ENCODE measurements at regions of chr2 and their contacts with region 1.

Region 1: GRCh38 chr2:59932341-59932740 is 621.1 kb downstream of the BCL11A start:
- DNase-seq: peak; percentile 10 to 47
- H3K4me3 ChIP-seq: no peak overlapping the region
- H3K27ac ChIP-seq: no peak overlapping the region
- H3K4me1 ChIP-seq: no peaks in the 10 kb centered on the region
- H3K27me3 ChIP-seq: no peaks in the 10 kb centered on the region
- CTCF ChIP-seq: peak; percentile 5 to 64 (median 54); a peak in 3 of 4 replicates
- EP300 ChIP-seq: no peak
- POLR2A ChIP-seq: no peak
- RAD21 ChIP-seq: peak; percentile 67 to 80

Region 2: GRCh38 chr2:59888015-59888414 is 44.3 kb before region 1 on chr2:
- CTCF ChIA-PET with region 1: interaction called, 16 read pairs
- POLR2A ChIA-PET with region 1: no interaction called
- DNase-seq: peak in 1 of 2 experiments; percentile 13
- H3K4me3 ChIP-seq: no peak overlapping the region
- H3K27ac ChIP-seq: no peak overlapping the region
- H3K4me1 ChIP-seq: peaks cover 2 to 8% (median 4%) of the 10 kb centered on the region in 4 experiments; a peak in 5 of 7 replicates
- H3K27me3 ChIP-seq: no peaks in the 10 kb centered on the region; a peak in 1 of 7 replicates
- CTCF ChIP-seq: no peak
- EP300 ChIP-seq: no peak
- POLR2A ChIP-seq: no peak
- RAD21 ChIP-seq: peak; percentile 46 to 53

Region 3: DNA sequence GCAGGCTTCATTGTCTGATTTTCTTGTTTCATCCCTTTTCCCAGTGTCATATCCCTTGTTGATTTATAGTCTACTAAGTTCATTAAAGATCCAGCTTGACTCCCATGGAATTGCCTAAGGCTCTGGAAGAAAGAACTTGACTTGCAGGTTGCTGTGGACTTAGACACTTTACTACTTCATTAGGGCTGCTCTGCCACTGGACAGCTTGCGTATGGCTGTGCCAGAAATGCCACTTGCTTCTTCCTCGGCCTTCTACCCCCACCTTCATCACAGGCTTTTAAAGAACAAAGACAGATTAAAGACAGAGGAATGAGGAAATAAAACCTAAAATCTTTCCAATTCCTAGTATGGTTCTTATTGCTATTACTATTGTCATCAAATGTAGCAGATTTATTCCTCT is 29.4 kb after region 1 on chr2:
- CTCF ChIA-PET with region 1: interaction called, 12 read pairs
- POLR2A ChIA-PET with region 1: no interaction called
- DNase-seq: no peak
- H3K4me3 ChIP-seq: no peak overlapping the region
- H3K27ac ChIP-seq: no peak overlapping the region
- H3K4me1 ChIP-seq: peaks cover 0 to 11% (median under 1%) of the 10 kb centered on the region in 4 experiments; a peak in 3 of 7 replicates
- H3K27me3 ChIP-seq: no peaks in the 10 kb centered on the region
- CTCF ChIP-seq: no peak
- EP300 ChIP-seq: no peak
- POLR2A ChIP-seq: no peak
- RAD21 ChIP-seq: no peak

Region 4: DNA sequence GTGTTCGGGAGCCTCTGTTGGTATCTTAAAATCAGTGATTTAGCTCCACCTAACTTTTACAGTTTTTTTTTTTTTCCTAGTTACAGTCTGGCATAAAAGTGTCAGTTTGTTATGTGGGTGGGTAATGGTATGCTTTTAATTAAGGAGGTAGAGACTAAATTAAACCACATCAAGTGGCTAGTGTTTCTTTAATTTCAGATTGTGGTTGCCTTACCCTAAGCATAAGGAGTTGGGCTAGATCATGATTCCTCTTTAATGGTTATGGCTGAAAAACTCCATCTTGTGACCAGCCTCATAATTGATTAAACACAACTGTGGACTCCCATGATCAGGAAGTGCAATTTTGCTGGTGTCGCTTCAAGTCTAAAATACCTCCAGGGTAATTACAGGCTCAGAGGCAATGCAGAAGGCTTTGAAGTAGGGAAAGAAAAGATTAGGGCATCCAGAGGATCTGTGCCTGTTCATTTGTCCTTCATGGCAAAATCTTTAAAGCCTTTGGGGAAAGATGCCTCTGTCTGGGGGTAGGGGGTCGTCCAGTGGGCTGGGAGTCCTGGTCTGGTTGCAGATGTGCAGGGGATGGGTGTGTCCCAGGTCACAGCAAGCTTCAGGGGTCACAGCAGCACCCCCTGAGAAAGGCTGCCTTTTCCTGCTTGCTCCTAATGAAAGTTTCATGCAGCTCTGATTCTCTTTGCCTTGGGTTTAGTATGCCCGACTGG is 41.9 kb after region 1 on chr2:
- CTCF ChIA-PET with region 1: interaction called, 11 read pairs
- POLR2A ChIA-PET with region 1: no interaction called
- DNase-seq: no peak
- H3K4me3 ChIP-seq: no peak overlapping the region
- H3K27ac ChIP-seq: no peak overlapping the region
- H3K4me1 ChIP-seq: peaks cover 0 to 2% (median 0%) of the 10 kb centered on the region in 4 experiments; a peak in 1 of 7 replicates
- H3K27me3 ChIP-seq: no peaks in the 10 kb centered on the region
- CTCF ChIP-seq: no peak
- EP300 ChIP-seq: no peak
- POLR2A ChIP-seq: no peak
- RAD21 ChIP-seq: no peak

Measured in H1 (cell line).